Colonic mucosa (tissue), 4 donors: ENCODE measurements at regions of chr12 and their contacts with region 1.

Region 1: DNA sequence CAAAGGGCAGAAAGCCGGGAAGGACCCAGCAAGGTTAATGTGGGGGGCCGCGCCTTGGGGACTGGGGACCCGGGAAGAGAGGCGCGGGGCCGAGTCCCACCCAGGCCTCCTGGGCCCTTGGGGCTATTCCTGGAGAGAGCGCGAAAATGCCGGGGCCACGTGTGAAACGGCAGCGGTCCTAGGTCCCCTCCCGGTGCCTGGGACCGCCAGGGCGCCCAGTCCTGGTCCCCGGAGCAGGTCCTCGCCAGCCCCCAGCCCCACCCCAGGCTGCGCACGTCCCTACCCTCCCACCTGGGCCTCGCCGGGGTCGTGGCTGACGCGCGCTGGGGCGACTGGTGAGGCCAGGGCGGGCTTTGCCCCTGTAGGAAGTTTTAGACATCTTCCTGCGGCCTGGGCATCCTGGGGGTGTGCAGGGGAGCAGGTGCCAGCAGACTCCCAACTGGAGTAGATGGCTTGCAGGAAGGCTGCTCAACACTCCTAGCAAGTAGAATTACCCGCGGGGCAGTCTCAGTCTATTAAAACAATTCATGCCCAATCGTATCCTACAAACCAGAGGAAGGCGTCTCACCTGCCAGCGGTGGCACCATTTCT is 708 bp downstream of the FAR2 start:
- DNase-seq: peak; percentile 61
- H3K4me3 ChIP-seq: peak overlapping the region; percentile 78
- H3K27ac ChIP-seq: peak overlapping the region; percentile 84
- H3K4me1 ChIP-seq: peaks cover 3% of the 10 kb centered on the region
- H3K27me3 ChIP-seq: no peaks in the 10 kb centered on the region
- CTCF ChIP-seq: no peak

Region 2: GRCh38 chr12:29088611-29089219 is 61.1 kb before region 1 on chr12:
- intact Hi-C with region 1: no loop called
- DNase-seq: no peak
- H3K4me3 ChIP-seq: no peak overlapping the region
- H3K27ac ChIP-seq: no peak overlapping the region
- H3K4me1 ChIP-seq: no peaks in the 10 kb centered on the region
- H3K27me3 ChIP-seq: no peaks in the 10 kb centered on the region
- CTCF ChIP-seq: peak; percentile 30

Region 3: GRCh38 chr12:29216797-29217575 is 67.2 kb after region 1 on chr12:
- intact Hi-C with region 1: loop called (anchors 10 kb)
- DNase-seq: no peak
- H3K4me3 ChIP-seq: no peak overlapping the region
- H3K27ac ChIP-seq: no peak overlapping the region
- H3K4me1 ChIP-seq: no peaks in the 10 kb centered on the region
- H3K27me3 ChIP-seq: no peaks in the 10 kb centered on the region
- CTCF ChIP-seq: no peak